ENCODE measurements at regions of chr19 and their contacts with region 1.

Region 1: GRCh38 chr19:12440541-12441316 is at the start of gene ZNF443:
- DNase-seq: peak; percentile 99
- H3K4me3 Mint-ChIP-seq: peak within 1 kb of the TSS; percentile 92
- H3K27ac Mint-ChIP-seq: peak within 1 kb of the TSS; percentile 72
- H3K4me1 Mint-ChIP-seq: no peaks in the 10 kb centered on the region
- H3K27me3 Mint-ChIP-seq: no peaks in the 10 kb centered on the region
- CTCF ChIP-seq: no peak
- total RNA-seq, gene ZNF443: 0.79 and 1.6 TPM in 2 replicates

Region 2: DNA sequence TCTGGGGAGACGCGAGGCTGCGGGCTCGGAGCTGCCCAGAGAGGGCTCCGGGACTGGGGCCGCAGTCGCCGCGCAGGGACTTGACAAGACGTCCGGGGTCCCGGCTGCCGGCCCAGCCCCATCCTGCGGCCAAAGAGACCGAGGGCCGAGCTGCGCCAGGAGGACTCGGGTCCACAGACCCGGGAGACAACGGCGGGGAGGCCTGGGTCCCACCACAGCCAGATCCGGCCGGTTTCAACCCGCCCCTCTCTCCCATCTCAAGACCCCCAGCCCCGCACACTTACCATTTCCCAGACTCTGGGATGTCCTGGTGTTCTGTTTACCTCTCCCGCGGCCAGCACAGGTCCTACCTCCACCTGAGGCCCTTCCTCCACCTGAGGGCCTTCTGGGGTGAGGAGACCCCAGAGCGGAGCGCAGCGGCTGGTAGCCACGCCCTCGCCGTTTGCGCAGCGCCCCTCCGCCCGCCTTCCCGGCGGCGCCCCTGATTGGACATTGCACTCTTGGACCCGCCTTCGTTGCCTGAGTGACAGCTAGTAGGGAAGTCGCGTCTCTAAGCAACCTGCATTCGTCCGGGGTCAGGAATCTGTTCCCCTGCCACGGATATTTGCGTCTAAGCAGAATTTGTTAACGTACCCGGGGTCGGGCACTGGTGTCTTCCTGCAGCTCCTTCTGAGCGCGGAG is 43.8 kb after region 1 on chr19 and contains the start of gene ZNF709:
- CTCF ChIA-PET with region 1: no interaction called
- POLR2A ChIA-PET with region 1: interaction called, 3 read pairs
- intact Hi-C with region 1: loop called (anchors 5 kb)
- DNase-seq: peak; percentile 63
- H3K4me3 Mint-ChIP-seq: peak within 1 kb of the TSS; percentile 86
- H3K27ac Mint-ChIP-seq: peak within 1 kb of the TSS; percentile 69
- H3K4me1 Mint-ChIP-seq: no peaks in the 10 kb centered on the region
- H3K27me3 Mint-ChIP-seq: no peaks in the 10 kb centered on the region
- CTCF ChIP-seq: no peak
- total RNA-seq, gene ZNF709: 0.23 and 0.52 TPM in 2 replicates